MCF 10A (cell line): ENCODE measurements at regions of chr3 and their contacts with region 1.

Region 1: GRCh38 chr3:69451594-69451993 is 65.7 kb upstream of the FRMD4B start:
- DNase-seq: no peak
- H3K4me3 Mint-ChIP-seq: no peak overlapping the region
- H3K27ac Mint-ChIP-seq: no peak overlapping the region
- H3K4me1 Mint-ChIP-seq: no peaks in the 10 kb centered on the region
- H3K27me3 Mint-ChIP-seq: no peaks in the 10 kb centered on the region
- CTCF ChIP-seq: no peak

Region 2: GRCh38 chr3:69200384-69201068 is 251.1 kb before region 1 on chr3:
- CTCF ChIA-PET with region 1: no interaction called
- POLR2A ChIA-PET with region 1: no interaction called
- intact Hi-C with region 1: no loop called
- DNase-seq: peak; percentile 92
- H3K4me3 Mint-ChIP-seq: peak overlapping the region; percentile 75
- H3K27ac Mint-ChIP-seq: peak overlapping the region; percentile 93
- H3K4me1 Mint-ChIP-seq: peaks cover 24% of the 10 kb centered on the region
- H3K27me3 Mint-ChIP-seq: no peaks in the 10 kb centered on the region
- CTCF ChIP-seq: no peak

Region 3: GRCh38 chr3:69439643-69440270 is 11.8 kb before region 1 on chr3:
- CTCF ChIA-PET with region 1: interaction called, 12 read pairs
- POLR2A ChIA-PET with region 1: interaction called, 5 read pairs
- intact Hi-C with region 1: no loop called
- DNase-seq: peak; percentile 35
- H3K4me3 Mint-ChIP-seq: no peak overlapping the region
- H3K27ac Mint-ChIP-seq: no peak overlapping the region
- H3K4me1 Mint-ChIP-seq: peaks cover 10% of the 10 kb centered on the region
- H3K27me3 Mint-ChIP-seq: no peaks in the 10 kb centered on the region
- CTCF ChIP-seq: peak; percentile 43